ENCODE measurements at regions of chr1 and their contacts with region 1.

Region 1: GRCh38 chr1:10941891-10942541 is 70.4 kb upstream of the TARDBP start:
- DNase-seq: peak; percentile 39
- H3K4me3 ChIP-seq: no peak overlapping the region
- H3K27ac ChIP-seq: no peak overlapping the region
- H3K4me1 ChIP-seq: peaks cover 10% of the 10 kb centered on the region
- H3K27me3 ChIP-seq: no peaks in the 10 kb centered on the region
- CTCF ChIP-seq: peak; percentile 72 to 89 (median 79)
- POLR2A ChIP-seq: no peak

Region 2: GRCh38 chr1:10507111-10507879 is 434.7 kb before region 1 on chr1:
- intact Hi-C with region 1: loop called (anchors 5 kb)
- DNase-seq: peak; percentile 71
- H3K4me3 ChIP-seq: no peak overlapping the region
- H3K27ac ChIP-seq: peak overlapping the region in 1 of 2 donors; percentile 6
- H3K4me1 ChIP-seq: peaks cover 10% of the 10 kb centered on the region
- H3K27me3 ChIP-seq: no peaks in the 10 kb centered on the region
- CTCF ChIP-seq: peak; percentile 51 to 89 (median 78)
- POLR2A ChIP-seq: no peak

Region 3: GRCh38 chr1:10651389-10651766 is 290.6 kb before region 1 on chr1:
- intact Hi-C with region 1: no loop called
- DNase-seq: no peak
- H3K4me3 ChIP-seq: no peak overlapping the region
- H3K27ac ChIP-seq: peak overlapping the region; percentile 73 to 89
- H3K4me1 ChIP-seq: peaks cover 16% of the 10 kb centered on the region
- H3K27me3 ChIP-seq: no peaks in the 10 kb centered on the region
- CTCF ChIP-seq: no peak
- POLR2A ChIP-seq: no peak

Region 4: GRCh38 chr1:10873189-10873588 is 68.8 kb before region 1 on chr1:
- intact Hi-C with region 1: loop called (anchors 5 kb)
- DNase-seq: no peak
- H3K4me3 ChIP-seq: no peak overlapping the region
- H3K27ac ChIP-seq: no peak overlapping the region
- H3K4me1 ChIP-seq: no peaks in the 10 kb centered on the region
- H3K27me3 ChIP-seq: no peaks in the 10 kb centered on the region
- CTCF ChIP-seq: no peak
- POLR2A ChIP-seq: no peak

Region 5: DNA sequence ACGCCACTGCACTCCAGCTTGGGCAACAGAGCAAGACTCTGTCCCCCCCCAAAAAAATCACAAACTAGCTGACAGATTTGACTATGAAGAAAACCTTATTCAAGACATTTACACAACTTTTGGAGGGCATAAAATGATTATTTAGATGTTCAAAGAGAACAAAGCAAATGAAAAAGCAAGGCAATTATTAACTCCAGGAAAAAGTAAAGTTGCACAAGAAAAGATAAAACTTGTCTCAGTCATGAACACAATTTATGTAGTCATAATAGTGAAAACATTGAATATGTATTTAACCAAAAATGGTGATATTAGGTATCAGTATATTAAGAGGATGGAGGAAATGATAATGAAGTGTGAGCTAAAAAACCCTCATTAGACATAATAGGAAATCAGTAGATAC is 58.5 kb after region 1 on chr1:
- intact Hi-C with region 1: no loop called
- DNase-seq: no peak
- H3K4me3 ChIP-seq: no peak overlapping the region
- H3K27ac ChIP-seq: no peak overlapping the region
- H3K4me1 ChIP-seq: no peaks in the 10 kb centered on the region
- H3K27me3 ChIP-seq: no peaks in the 10 kb centered on the region
- CTCF ChIP-seq: no peak
- POLR2A ChIP-seq: no peak

Measured in prostate gland (tissue), 2 donors.